CD8-positive, alpha-beta memory T cell (primary cell): ENCODE measurements at regions of chr10 and their contacts with region 1.

Region 1: DNA sequence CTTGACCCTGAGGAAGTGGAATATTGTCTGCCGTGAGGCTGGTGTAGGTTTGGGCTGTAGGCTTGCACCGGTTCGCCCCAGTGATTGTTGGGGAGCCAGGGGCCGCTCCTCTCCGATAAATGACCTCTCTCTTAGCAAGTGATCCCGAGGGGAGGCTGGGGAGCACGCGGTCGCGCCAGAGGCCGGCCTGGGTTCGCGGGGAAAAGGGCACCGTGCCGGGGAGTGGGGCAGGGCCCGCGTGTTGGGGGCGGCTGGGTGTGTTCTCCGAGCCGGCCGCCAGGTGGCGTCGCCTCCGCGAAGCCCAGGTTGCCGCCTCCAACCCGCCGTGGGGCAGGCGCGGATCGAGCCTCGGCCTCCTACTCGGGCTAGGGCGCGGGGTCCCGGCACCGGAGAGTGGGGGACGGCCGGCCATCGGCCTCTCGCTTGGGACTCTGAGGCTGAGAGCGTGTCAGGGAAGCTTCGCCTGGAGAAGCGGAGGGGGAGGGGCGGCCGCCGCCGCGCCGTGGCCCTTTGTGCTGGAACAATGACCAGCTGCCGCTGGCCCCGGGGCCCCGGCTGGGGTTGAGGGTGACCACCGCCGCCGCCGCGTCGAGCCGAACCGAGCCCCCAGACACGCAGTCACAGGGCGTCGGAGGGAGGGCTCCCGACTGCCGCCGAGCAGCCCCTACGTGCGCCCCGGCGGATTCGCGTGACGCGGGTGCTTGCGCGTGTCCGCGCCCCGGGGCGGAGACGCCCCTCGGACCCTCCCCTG is 442 bp upstream of the LZTS2 start:
- DNase-seq: peak; percentile 71 to 84 (median 78)
- H3K4me3 ChIP-seq: peak overlapping the region; percentile 72
- H3K4me3 Mint-ChIP-seq: peak overlapping the region; percentile 85 to 99 (median 89)
- H3K27ac ChIP-seq: peak overlapping the region; percentile 78
- H3K27ac Mint-ChIP-seq: peak overlapping the region; percentile 72 to 94 (median 91)
- H3K4me1 ChIP-seq: peaks cover 24% of the 10 kb centered on the region
- H3K4me1 Mint-ChIP-seq: peaks cover 21 to 35% (median 23%) of the 10 kb centered on the region in 3 donors
- H3K27me3 ChIP-seq: no peaks in the 10 kb centered on the region
- H3K27me3 Mint-ChIP-seq: no peaks in the 10 kb centered on the region

Region 2: GRCh38 chr10:100969187-100970075 is 29.7 kb before region 1 on chr10 and contains the start of gene SEMA4G:
- CTCF ChIA-PET with region 1: interaction called, 18 read pairs
- POLR2A ChIA-PET with region 1: no interaction called
- DNase-seq: peak in 4 of 5 donors; percentile 23 to 47 (median 28)
- H3K4me3 ChIP-seq: peak within 1 kb of the TSS; percentile 47
- H3K4me3 Mint-ChIP-seq: peak within 1 kb of the TSS; percentile 69 to 89 (median 77)
- H3K27ac ChIP-seq: no peak within 1 kb of the TSS
- H3K27ac Mint-ChIP-seq: peak within 1 kb of the TSS in 6 of 8 donors; percentile 10 to 77 (median 34)
- H3K4me1 ChIP-seq: peaks cover 5% of the 10 kb centered on the region
- H3K4me1 Mint-ChIP-seq: peaks cover 8 to 20% (median 20%) of the 10 kb centered on the region in 3 donors
- H3K27me3 ChIP-seq: no peaks in the 10 kb centered on the region
- H3K27me3 Mint-ChIP-seq: no peaks in the 10 kb centered on the region
- total RNA-seq, gene SEMA4G: 0.49 to 0.57 TPM

Region 3: GRCh38 chr10:100986952-100987750 is 12.0 kb before region 1 on chr10 and contains the starts of genes MRPL43 and TWNK:
- CTCF ChIA-PET with region 1: interaction called, 73 read pairs
- POLR2A ChIA-PET with region 1: interaction called, 10 read pairs
- DNase-seq: peak; percentile 78 to 89 (median 79)
- H3K4me3 ChIP-seq: peak within 1 kb of the TSS; percentile 99
- H3K4me3 Mint-ChIP-seq: peak within 1 kb of the TSS; percentile 86 to 99 (median 93)
- H3K27ac ChIP-seq: peak within 1 kb of the TSS; percentile 76
- H3K27ac Mint-ChIP-seq: peak within 1 kb of the TSS; percentile 44 to 96 (median 88)
- H3K4me1 ChIP-seq: peaks cover 28% of the 10 kb centered on the region
- H3K4me1 Mint-ChIP-seq: peaks cover 38 to 58% (median 40%) of the 10 kb centered on the region in 3 donors
- H3K27me3 ChIP-seq: no peaks in the 10 kb centered on the region
- H3K27me3 Mint-ChIP-seq: peaks cover 0 to 1% of the 10 kb centered on the region in 2 donors
- total RNA-seq, gene MRPL43: 62.5 to 62.8 TPM
- total RNA-seq, gene TWNK: 40.6 to 44.3 TPM

Region 4: GRCh38 chr10:101012525-101013364 is 13.6 kb after region 1 on chr10:
- CTCF ChIA-PET with region 1: interaction called, 98 read pairs
- POLR2A ChIA-PET with region 1: no interaction called
- DNase-seq: peak; percentile 50 to 86 (median 66)
- H3K4me3 ChIP-seq: no peak overlapping the region
- H3K4me3 Mint-ChIP-seq: no peak overlapping the region
- H3K27ac ChIP-seq: no peak overlapping the region
- H3K27ac Mint-ChIP-seq: peak overlapping the region in 2 of 8 donors; percentile 11 to 69
- H3K4me1 ChIP-seq: peaks cover 13% of the 10 kb centered on the region
- H3K4me1 Mint-ChIP-seq: peaks cover 9 to 17% (median 16%) of the 10 kb centered on the region in 3 donors
- H3K27me3 ChIP-seq: peaks cover 14% of the 10 kb centered on the region
- H3K27me3 Mint-ChIP-seq: peaks cover 26 to 29% of the 10 kb centered on the region in 2 donors

Region 5: DNA sequence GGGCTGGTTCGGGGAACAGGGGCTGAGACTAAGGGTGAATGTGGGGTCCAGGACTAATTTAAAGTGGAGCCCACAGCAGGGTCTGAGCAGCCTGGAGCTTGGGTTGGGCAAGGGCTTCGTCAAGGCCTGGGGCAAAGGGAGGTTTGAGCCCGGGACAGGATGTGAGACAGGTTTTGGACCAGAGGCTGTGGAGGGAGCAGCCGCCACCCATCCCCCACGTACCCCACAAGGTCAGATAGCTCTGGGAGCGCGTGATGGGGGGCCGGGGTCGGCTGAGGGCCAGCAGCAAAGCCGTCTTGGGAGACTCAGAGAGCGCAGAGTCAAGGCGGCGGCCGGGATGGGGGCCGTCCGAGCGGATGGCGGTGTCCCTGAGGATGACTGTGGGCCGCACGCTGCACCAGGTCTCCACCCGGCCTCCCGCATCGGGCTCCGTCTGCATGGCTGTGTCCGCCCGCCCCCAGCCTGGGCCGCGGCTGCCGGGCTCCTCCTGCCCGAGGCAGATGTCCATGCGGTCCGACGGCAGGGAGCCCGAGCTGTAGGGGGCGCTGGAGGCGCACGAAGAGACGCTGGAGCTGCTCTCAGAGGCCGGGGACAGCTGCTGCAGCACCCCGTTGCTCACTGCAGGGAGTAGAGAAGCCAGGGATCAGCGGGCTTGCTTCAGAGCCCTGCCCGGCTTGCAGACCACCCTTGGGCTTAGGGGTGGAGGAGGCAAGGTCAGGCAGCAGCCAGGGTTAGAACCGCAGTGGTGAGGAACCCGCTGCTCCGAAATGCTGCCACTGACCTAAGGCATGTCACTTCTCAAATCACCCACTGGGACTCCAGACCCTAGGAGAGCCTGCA is 19.7 kb after region 1 on chr10:
- CTCF ChIA-PET with region 1: interaction called, 98 read pairs
- POLR2A ChIA-PET with region 1: no interaction called
- DNase-seq: peak; percentile 36 to 79 (median 53)
- H3K4me3 ChIP-seq: no peak overlapping the region
- H3K4me3 Mint-ChIP-seq: no peak overlapping the region
- H3K27ac ChIP-seq: no peak overlapping the region
- H3K27ac Mint-ChIP-seq: no peak overlapping the region
- H3K4me1 ChIP-seq: peaks cover 3% of the 10 kb centered on the region
- H3K4me1 Mint-ChIP-seq: peaks cover 2 to 10% (median 6%) of the 10 kb centered on the region in 3 donors
- H3K27me3 ChIP-seq: peaks cover 20% of the 10 kb centered on the region
- H3K27me3 Mint-ChIP-seq: peaks cover 36 to 52% of the 10 kb centered on the region in 2 donors

Region 6: DNA sequence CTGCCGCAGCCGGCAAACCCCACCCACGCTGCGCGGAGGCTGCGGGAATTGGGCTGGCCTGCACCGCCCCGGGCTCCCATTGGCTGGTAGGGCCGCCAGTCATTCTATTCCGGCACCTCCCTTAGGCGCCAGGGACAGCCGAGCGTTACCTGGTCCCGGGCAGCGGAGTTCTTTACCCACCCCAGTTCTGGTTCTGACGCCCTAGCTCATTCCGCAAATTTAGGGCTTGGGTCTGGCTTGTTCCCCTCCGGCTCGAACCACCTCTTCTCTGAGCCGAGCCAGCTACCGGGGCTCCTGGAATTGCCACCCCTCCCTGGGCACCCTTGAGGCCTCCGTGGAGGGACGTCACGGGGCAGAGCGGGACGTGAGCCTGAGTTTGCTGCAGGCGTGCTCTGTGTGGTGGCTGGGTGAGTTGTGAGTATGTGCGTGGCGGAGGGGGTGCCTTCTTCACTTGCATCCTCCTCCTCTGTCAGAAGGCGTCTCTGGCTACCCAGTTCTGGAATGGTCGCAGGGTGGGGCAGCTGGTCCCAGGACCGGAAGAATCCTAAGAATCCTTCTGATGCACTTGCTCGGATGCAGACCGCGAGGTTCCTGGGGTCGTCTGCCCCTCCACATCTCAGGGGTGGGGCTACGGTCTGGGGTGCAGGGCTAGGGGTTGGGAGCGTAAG is 32.1 kb after region 1 on chr10 and contains the starts of genes PDZD7 and SFXN3:
- CTCF ChIA-PET with region 1: interaction called, 25 read pairs
- POLR2A ChIA-PET with region 1: interaction called, 5 read pairs
- DNase-seq: peak; percentile 94 to 97 (median 95)
- H3K4me3 ChIP-seq: peak within 1 kb of the TSS; percentile 85
- H3K4me3 Mint-ChIP-seq: peak within 1 kb of the TSS; percentile 92 to 98 (median 93)
- H3K27ac ChIP-seq: peak within 1 kb of the TSS; percentile 94
- H3K27ac Mint-ChIP-seq: peak within 1 kb of the TSS; percentile 94 to 100 (median 98)
- H3K4me1 ChIP-seq: peaks cover 15% of the 10 kb centered on the region
- H3K4me1 Mint-ChIP-seq: peaks cover 18 to 25% (median 22%) of the 10 kb centered on the region in 3 donors
- H3K27me3 ChIP-seq: no peaks in the 10 kb centered on the region
- H3K27me3 Mint-ChIP-seq: peaks cover 3 to 5% of the 10 kb centered on the region in 2 donors
- total RNA-seq, gene PDZD7: 0.31 to 0.33 TPM
- total RNA-seq, gene SFXN3: 25.2 to 26.5 TPM

Region 7: GRCh38 chr10:101042667-101043355 is 43.6 kb after region 1 on chr10:
- CTCF ChIA-PET with region 1: interaction called, 15 read pairs
- POLR2A ChIA-PET with region 1: interaction called, 4 read pairs
- DNase-seq: peak; percentile 65 to 87 (median 67)
- H3K4me3 ChIP-seq: peak overlapping the region; percentile 67
- H3K4me3 Mint-ChIP-seq: peak overlapping the region; percentile 92 to 99 (median 97)
- H3K27ac ChIP-seq: peak overlapping the region; percentile 66
- H3K27ac Mint-ChIP-seq: peak overlapping the region; percentile 74 to 100 (median 96)
- H3K4me1 ChIP-seq: peaks cover 17% of the 10 kb centered on the region
- H3K4me1 Mint-ChIP-seq: peaks cover 20 to 27% (median 21%) of the 10 kb centered on the region in 3 donors
- H3K27me3 ChIP-seq: no peaks in the 10 kb centered on the region
- H3K27me3 Mint-ChIP-seq: peaks cover 8 to 18% of the 10 kb centered on the region in 2 donors

Region 8: DNA sequence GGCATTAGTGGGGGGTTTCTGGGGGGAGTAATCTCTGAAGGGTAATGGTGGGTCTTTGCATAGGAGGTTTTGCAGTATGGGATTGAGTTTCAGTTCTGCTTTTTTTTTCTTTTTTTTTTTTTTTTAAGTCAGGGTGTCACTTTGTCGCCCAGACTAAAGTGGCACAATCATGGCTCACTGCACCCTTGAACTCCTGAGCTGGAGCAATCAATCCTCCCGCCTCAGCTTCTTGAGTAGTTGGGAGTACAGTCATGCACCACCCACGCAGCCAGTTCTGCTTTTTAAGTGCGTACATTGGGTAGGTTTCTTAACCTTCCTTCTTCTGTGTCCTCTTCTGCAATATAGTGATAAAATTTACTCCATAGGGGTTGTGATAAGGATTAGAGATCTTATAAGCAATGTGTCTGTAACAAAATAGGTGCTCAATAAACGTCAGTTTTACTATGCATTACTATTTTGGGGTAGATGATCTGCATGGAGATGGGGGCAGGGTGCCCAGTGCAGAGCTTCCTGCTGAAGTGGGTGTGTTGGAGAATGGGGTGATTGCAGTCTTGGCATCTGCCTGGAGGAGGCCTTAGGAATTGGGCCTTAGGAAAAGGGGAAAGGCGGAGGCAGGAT is 72.2 kb after region 1 on chr10:
- CTCF ChIA-PET with region 1: no interaction called
- POLR2A ChIA-PET with region 1: no interaction called
- DNase-seq: no peak
- H3K4me3 ChIP-seq: no peak overlapping the region
- H3K4me3 Mint-ChIP-seq: no peak overlapping the region
- H3K27ac ChIP-seq: no peak overlapping the region
- H3K27ac Mint-ChIP-seq: no peak overlapping the region
- H3K4me1 ChIP-seq: peaks cover 11% of the 10 kb centered on the region
- H3K4me1 Mint-ChIP-seq: peaks cover 5 to 14% (median 7%) of the 10 kb centered on the region in 3 donors
- H3K27me3 ChIP-seq: peaks cover 9% of the 10 kb centered on the region
- H3K27me3 Mint-ChIP-seq: peaks cover 25 to 56% of the 10 kb centered on the region in 2 donors

Region 9: GRCh38 chr10:101110856-101111546 is 111.8 kb after region 1 on chr10:
- CTCF ChIA-PET with region 1: no interaction called
- POLR2A ChIA-PET with region 1: no interaction called
- DNase-seq: no peak
- H3K4me3 ChIP-seq: no peak overlapping the region
- H3K4me3 Mint-ChIP-seq: no peak overlapping the region
- H3K27ac ChIP-seq: no peak overlapping the region
- H3K27ac Mint-ChIP-seq: peak overlapping the region in 1 of 8 donors; percentile 81
- H3K4me1 ChIP-seq: no peaks in the 10 kb centered on the region
- H3K4me1 Mint-ChIP-seq: no peaks in the 10 kb centered on the region
- H3K27me3 ChIP-seq: no peaks in the 10 kb centered on the region
- H3K27me3 Mint-ChIP-seq: peaks cover 26 to 64% of the 10 kb centered on the region in 2 donors